ENCODE measurements at regions of chr11 and their contacts with region 1.

Region 1: GRCh38 chr11:6505577-6506240 is 8.6 kb downstream of the DNHD1 start:
- DNase-seq: peak in 4 of 14 experiments; percentile 29 to 66 (median 57)
- ATAC-seq: peak; percentile 59
- H3K4me3 ChIP-seq: no peak overlapping the region
- H3K4me3 Mint-ChIP-seq: no peak overlapping the region
- H3K27ac ChIP-seq: no peak overlapping the region
- H3K27ac Mint-ChIP-seq: no peak overlapping the region
- H3K4me1 ChIP-seq: no peaks in the 10 kb centered on the region
- H3K4me1 Mint-ChIP-seq: peaks cover 5% of the 10 kb centered on the region
- H3K27me3 ChIP-seq: no peaks in the 10 kb centered on the region
- H3K27me3 Mint-ChIP-seq: no peaks in the 10 kb centered on the region
- CTCF ChIP-seq: peak; percentile 77

Region 2: DNA sequence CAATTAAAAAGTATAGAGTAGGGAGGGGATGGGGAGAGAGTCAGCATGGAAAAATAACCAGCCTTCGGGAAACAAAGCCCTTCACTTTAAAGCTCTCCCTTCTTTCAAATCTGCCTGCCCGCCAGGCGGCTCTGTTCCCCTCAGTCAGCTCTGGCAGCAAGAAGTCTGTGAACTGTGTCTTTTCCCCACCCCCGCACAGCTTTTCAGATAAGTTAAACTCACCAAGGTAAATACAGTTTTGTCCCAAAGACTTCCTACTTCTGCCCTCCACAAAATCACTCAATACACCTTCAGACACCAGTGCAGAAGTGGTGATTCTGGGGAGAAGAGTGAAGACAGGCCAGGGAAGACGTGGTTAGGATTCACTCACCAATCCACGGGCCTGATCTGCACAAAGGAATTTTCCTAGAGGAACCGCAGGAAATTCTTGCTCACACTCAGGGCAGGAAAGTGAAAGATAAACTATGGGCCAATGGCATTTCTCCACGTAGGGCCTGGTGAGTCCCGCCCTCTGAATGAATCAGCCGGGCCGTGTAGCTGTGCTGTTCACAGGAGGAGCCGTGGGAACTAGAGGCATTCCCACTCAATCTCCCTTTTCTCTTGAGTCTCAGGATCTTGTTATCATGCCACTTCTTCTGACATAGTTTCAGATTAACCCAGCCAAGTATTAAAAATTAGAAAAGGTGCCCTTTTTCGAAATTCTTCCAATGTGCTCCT is 820.9 kb before region 1 on chr11 and contains the start of gene TRIM5:
- CTCF ChIA-PET with region 1: no interaction called
- POLR2A ChIA-PET with region 1: no interaction called
- intact Hi-C with region 1: no loop called
- DNase-seq: peak; percentile 54 to 92 (median 72)
- ATAC-seq: peak; percentile 84
- H3K4me3 ChIP-seq: peak within 1 kb of the TSS; percentile 72
- H3K4me3 Mint-ChIP-seq: peak within 1 kb of the TSS; percentile 94
- H3K27ac ChIP-seq: peak within 1 kb of the TSS; percentile 89 to 90
- H3K27ac Mint-ChIP-seq: peak within 1 kb of the TSS; percentile 88
- H3K4me1 ChIP-seq: peaks cover 38% of the 10 kb centered on the region
- H3K4me1 Mint-ChIP-seq: peaks cover 70% of the 10 kb centered on the region
- H3K27me3 ChIP-seq: no peaks in the 10 kb centered on the region
- H3K27me3 Mint-ChIP-seq: no peaks in the 10 kb centered on the region
- CTCF ChIP-seq: peak; percentile 76
- total RNA-seq, gene TRIM5: 5.9 to 8.0 TPM

Region 3: GRCh38 chr11:6298605-6299004 is 207.1 kb before region 1 on chr11:
- CTCF ChIA-PET with region 1: no interaction called
- POLR2A ChIA-PET with region 1: no interaction called
- intact Hi-C with region 1: loop called in 1 of 2 experiments (anchors 5 kb)
- DNase-seq: peak in 1 of 14 experiments; percentile 14
- ATAC-seq: no peak
- H3K4me3 ChIP-seq: no peak overlapping the region
- H3K4me3 Mint-ChIP-seq: no peak overlapping the region
- H3K27ac ChIP-seq: no peak overlapping the region
- H3K27ac Mint-ChIP-seq: no peak overlapping the region
- H3K4me1 ChIP-seq: no peaks in the 10 kb centered on the region
- H3K4me1 Mint-ChIP-seq: no peaks in the 10 kb centered on the region
- H3K27me3 ChIP-seq: peaks cover 0 to 2% of the 10 kb centered on the region in 2 experiments
- H3K27me3 Mint-ChIP-seq: peaks cover 46% of the 10 kb centered on the region
- CTCF ChIP-seq: no peak

Region 4: DNA sequence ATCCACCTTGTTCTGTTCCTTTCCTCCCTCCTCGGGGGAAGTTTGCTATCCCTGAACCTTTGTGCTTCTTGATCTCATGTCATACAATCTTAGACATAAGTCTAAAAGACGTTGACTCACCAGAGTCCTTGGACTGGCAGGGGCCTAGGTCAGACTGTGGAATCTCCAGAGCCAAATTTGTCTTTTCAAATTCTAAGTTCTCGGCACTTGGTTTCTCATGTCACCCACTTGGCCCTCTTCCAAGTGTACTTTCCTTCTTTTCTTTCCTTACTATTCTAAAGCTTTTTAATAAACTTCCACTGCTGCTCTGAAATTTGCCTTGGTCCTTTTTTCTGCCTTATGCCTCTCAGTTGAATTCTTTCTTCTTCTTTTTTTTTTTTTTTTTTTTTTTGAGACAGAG is 145.5 kb before region 1 on chr11:
- CTCF ChIA-PET with region 1: no interaction called
- POLR2A ChIA-PET with region 1: no interaction called
- intact Hi-C with region 1: no loop called
- DNase-seq: no peak
- ATAC-seq: no peak
- H3K4me3 ChIP-seq: no peak overlapping the region
- H3K4me3 Mint-ChIP-seq: no peak overlapping the region
- H3K27ac ChIP-seq: no peak overlapping the region
- H3K27ac Mint-ChIP-seq: no peak overlapping the region
- H3K4me1 ChIP-seq: no peaks in the 10 kb centered on the region
- H3K4me1 Mint-ChIP-seq: peaks cover 4% of the 10 kb centered on the region
- H3K27me3 ChIP-seq: peaks cover 0 to 2% of the 10 kb centered on the region in 2 experiments
- H3K27me3 Mint-ChIP-seq: no peaks in the 10 kb centered on the region
- CTCF ChIP-seq: no peak

Region 5: DNA sequence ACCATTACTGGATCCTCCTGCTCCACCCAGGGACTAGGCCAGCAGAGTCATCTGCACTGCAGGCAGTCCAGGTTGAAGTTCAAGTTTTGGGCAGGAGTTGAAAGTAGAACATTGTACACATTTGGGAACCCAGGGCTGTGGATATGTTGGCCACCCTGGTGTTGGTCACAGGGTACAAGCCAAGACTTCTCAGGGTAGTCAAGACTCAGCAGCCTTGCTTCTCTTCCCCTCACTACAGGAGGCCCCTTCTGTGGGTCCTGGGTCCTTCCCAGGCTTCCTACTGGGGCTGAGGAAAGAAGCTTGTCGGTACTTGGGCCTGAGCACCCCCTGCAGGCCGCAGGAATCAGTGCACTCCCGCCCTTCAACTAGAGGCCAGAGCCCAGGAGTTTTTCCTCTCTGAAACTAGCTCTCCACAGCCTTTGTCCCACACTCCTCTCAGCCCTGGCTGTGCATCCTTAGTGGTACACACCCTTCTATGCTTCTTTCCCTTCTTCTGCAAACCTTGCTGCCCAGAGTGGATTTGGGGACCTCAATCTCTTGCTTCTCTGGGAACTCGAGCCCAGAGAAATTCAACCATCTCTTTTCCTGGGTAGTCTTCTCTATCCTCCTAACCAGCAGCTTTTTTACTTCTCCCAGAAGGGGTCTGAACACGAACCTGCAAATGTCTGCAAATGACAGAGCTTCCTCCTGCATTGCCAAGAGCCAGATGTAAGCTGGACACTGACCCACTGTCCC is 62.3 kb before region 1 on chr11:
- CTCF ChIA-PET with region 1: interaction called, 4 read pairs
- POLR2A ChIA-PET with region 1: no interaction called
- intact Hi-C with region 1: loop called in 1 of 2 experiments (anchors 2 kb)
- DNase-seq: peak; percentile 37 to 82 (median 48)
- ATAC-seq: peak; percentile 91
- H3K4me3 ChIP-seq: no peak overlapping the region
- H3K4me3 Mint-ChIP-seq: no peak overlapping the region
- H3K27ac ChIP-seq: no peak overlapping the region
- H3K27ac Mint-ChIP-seq: no peak overlapping the region
- H3K4me1 ChIP-seq: peaks cover 21% of the 10 kb centered on the region
- H3K4me1 Mint-ChIP-seq: no peaks in the 10 kb centered on the region
- H3K27me3 ChIP-seq: no peaks in the 10 kb centered on the region
- H3K27me3 Mint-ChIP-seq: no peaks in the 10 kb centered on the region
- CTCF ChIP-seq: peak; percentile 89

Measured in CD4-positive, alpha-beta T cell (primary cell).